ENCODE measurements at regions of chr20 and their contacts with region 1.

Region 1: DNA sequence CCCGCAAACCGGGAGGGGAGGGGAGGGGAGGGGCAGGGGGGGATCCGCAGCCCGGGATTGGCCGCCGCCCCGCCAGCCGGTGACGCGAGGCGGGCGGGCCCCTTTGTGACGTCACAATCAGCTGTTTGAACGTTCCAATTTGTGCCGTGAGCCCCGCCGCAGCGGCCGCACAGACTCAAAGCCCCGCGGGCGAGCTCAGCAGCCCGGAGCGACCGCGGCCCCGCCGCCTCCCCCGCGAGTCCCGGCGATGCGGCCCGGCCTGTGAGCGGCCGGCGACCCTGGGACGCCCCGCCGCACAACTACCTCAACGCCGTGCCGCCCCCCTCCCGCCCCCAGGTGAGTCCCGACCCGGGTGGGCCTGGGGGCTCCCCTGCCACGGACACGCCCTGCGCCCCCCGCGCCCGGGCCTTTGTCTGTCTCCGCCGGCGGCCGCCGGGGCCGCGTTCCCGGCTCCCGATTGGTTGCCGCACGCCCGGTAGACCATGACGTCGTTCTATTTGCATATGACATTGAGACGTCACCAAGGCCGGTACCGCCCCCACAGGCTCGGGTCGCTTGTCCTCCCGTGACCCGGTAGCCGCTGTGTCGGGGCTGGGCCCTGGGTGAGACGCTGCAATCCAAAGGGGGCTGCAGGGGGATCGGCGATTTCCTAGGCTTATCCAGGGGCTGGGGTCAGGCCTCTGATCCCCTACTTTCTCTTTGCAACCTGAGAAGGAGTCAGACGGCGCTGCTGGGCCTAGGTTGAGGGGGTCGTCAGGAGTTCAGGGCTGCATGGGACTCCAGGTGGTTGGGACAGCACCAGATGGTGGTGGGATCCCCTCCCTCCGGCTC is at the start of gene TP53INP2:
- DNase-seq: peak; percentile 98
- ATAC-seq: peak; percentile 79
- total RNA-seq, gene TP53INP2: 113 TPM

Region 2: DNA sequence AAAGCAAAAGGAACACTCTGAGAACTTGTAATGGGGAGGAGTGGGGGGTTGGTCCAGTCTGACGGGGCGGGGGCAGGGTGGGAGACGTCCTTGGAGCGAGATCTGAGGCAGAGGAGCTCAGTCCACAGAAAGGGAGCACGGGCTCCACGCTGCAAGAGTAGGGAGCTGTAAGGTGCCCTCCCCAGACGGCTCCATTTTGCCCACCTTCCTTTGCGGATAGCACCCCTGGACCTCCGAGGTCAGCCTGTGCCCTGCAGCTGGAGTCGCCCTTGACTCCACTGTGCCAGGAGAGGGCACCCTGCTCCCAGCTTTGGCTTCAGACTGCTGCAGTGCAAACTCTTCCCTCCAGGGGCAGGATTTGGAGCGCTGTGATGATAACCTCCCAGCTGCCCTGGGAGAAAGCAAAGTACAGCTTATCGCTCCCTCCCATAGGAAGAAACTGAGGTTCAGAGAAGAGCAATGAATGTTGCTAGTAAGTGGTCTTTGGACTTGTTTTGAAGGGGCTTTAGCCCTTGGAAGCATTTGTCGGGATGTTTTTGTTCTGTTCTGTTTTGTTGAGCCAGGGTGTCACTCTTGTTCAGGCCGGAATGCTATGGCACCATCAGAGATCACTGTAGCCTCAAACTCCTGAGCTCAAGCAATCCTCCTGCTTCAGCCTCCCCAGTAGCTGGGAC is 391.7 kb before region 1 on chr20:
- intact Hi-C with region 1: loop called (anchors 5 kb)
- DNase-seq: peak; percentile 82
- ATAC-seq: peak; percentile 98

Region 3: DNA sequence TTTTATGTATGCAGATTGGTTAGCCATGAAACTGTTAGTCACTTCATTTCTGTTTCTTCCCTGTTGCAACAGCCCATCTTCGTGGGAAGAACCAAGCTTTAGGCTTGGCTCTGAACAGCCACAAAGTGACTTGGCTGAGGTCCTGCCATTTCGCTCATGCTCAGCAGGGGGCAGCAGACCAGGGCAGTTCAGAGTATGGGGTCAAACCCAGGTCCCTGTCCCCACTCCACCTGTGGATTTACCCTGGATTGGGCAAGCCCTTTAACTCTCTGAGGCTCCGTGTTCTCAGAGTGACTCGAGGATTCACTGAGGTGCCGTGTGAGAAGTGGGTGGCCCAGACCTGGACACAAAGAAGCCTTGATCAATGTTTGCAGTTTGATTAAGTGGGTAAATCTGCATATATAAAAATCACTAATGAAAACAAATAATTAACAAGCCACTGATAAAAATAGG is 165.7 kb before region 1 on chr20:
- intact Hi-C with region 1: loop called (anchors 5 kb)
- DNase-seq: no peak
- ATAC-seq: peak; percentile 58

Region 4: DNA sequence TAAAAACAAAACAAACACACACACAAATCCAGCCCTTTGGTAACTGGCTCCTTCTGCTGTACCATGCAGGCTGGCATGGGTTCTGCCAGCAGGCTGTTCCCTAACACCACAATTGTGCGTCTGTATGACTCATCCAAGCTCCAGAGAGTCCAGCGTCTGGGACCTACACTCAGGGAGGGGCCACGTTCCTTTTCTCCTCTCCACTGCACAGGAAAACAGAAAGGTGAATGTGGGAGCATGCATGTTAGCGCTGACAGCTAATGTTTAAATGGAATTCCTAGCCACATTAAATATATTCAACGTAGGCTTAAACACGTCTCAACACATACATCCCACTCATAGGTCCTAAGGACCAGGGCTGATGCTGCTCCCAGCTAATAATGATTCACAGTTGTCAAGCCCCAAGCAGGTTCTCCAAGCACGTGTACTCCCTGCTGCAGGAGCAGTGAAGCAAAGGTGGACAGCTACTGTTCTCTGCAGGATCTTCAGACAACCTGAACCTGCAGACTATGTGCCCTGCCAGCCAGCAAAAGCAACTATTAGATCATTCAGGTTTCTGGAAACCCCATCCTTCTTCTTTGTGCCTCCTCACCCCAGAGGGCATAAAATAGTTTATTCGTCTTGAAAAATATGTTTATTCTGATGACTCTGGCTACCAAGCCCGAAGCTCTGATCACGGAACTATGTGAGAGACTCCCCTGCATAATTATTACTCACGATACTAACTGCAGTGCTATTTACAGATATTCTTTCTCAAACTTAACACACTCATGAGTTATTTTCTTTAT is 125.0 kb before region 1 on chr20:
- intact Hi-C with region 1: loop called (anchors 1 kb)
- DNase-seq: peak; percentile 75
- ATAC-seq: peak; percentile 83

Region 5: DNA sequence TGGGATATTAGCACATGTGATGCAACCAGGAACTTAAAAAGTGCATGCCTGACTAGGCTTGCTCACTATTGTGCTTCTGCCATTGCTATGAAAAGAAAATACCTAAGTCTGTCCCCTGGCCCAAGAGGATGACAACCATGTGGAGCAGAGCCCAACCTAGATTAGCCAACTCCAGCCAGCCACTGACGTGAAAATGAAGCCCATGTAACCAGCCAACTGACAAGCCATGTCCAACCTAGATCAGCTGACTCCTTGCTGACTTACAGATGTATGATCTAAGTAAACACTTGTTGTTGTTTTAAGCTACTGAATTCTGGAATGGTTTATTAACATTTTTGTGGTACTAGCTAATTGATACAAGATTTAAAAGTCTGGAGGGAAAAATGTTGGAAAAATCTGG is 75.0 kb before region 1 on chr20:
- intact Hi-C with region 1: loop called (anchors 5 kb)
- DNase-seq: no peak
- ATAC-seq: peak; percentile 82

Region 6: GRCh38 chr20:34676642-34677373 is 27.6 kb before region 1 on chr20 and contains the start of gene PIGU:
- intact Hi-C with region 1: loop called (anchors 2 kb)
- DNase-seq: peak; percentile 99
- ATAC-seq: peak; percentile 100
- total RNA-seq, gene PIGU: 12.9 TPM

Region 7: GRCh38 chr20:34938502-34939163 is 234.2 kb after region 1 on chr20:
- intact Hi-C with region 1: no loop called
- DNase-seq: peak; percentile 84
- ATAC-seq: peak; percentile 81